Natural killer cell (primary cell): ENCODE measurements at regions of chr10 and their contacts with region 1.

Region 1: DNA sequence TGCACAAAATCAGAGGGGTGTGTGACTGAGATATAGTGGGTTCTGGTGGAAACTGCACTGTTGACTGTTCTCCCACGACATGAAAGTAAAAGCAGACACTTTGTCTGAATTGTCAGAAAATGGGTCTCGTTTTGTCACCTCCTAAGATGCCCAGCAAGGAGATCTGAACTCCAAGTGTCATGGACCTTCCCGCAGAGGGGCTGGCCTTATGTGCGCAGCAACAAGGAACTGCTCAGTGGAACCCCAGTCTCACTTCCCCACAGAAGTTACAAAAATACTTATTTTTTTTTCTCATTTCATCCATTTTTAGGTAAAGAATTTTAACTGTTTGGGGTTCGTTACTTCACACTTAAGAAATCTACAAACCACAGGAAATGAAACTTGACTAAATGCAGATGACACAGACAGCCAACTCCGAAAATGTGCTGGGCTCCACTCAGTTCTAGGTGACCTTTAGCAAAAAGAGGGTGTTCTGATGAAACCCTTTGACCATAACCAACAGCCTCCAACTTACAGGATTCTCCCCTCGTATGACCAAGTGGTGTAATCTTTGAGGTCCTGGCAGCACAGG is 115.0 kb downstream of the FAM107B start:
- DNase-seq: peak; percentile 52 to 68
- ATAC-seq: peak; percentile 78 to 88 (median 87)
- H3K4me3 ChIP-seq: no peak overlapping the region
- H3K4me3 Mint-ChIP-seq: peak overlapping the region; percentile 82
- H3K27ac ChIP-seq: peak overlapping the region; percentile 77
- H3K27ac Mint-ChIP-seq: peak overlapping the region; percentile 84 to 93
- H3K4me1 ChIP-seq: peaks cover 39% of the 10 kb centered on the region
- H3K4me1 Mint-ChIP-seq: peaks cover 74 to 85% of the 10 kb centered on the region in 2 donors
- H3K27me3 ChIP-seq: no peaks in the 10 kb centered on the region
- H3K27me3 Mint-ChIP-seq: no peaks in the 10 kb centered on the region
- CTCF ChIP-seq: no peak

Region 2: GRCh38 chr10:12783293-12783692 is 1876.4 kb before region 1 on chr10:
- intact Hi-C with region 1: no loop called
- DNase-seq: no peak
- ATAC-seq: no peak
- H3K4me3 ChIP-seq: no peak overlapping the region
- H3K4me3 Mint-ChIP-seq: no peak overlapping the region
- H3K27ac ChIP-seq: no peak overlapping the region
- H3K27ac Mint-ChIP-seq: no peak overlapping the region
- H3K4me1 ChIP-seq: no peaks in the 10 kb centered on the region
- H3K4me1 Mint-ChIP-seq: peaks cover 6 to 10% of the 10 kb centered on the region in 2 donors
- H3K27me3 ChIP-seq: no peaks in the 10 kb centered on the region
- H3K27me3 Mint-ChIP-seq: no peaks in the 10 kb centered on the region
- CTCF ChIP-seq: no peak

Region 3: GRCh38 chr10:14571866-14572507 is 87.7 kb before region 1 on chr10:
- intact Hi-C with region 1: loop called (anchors 5 kb)
- DNase-seq: peak; percentile 54 to 88
- ATAC-seq: peak; percentile 57 to 69 (median 63)
- H3K4me3 ChIP-seq: peak overlapping the region; percentile 24
- H3K4me3 Mint-ChIP-seq: peak overlapping the region; percentile 88
- H3K27ac ChIP-seq: peak overlapping the region; percentile 84
- H3K27ac Mint-ChIP-seq: peak overlapping the region; percentile 95 to 98
- H3K4me1 ChIP-seq: peaks cover 48% of the 10 kb centered on the region
- H3K4me1 Mint-ChIP-seq: peaks cover 61 to 63% of the 10 kb centered on the region in 2 donors
- H3K27me3 ChIP-seq: no peaks in the 10 kb centered on the region
- H3K27me3 Mint-ChIP-seq: no peaks in the 10 kb centered on the region
- CTCF ChIP-seq: no peak

Region 4: GRCh38 chr10:14648005-14648765 is 11.5 kb before region 1 on chr10:
- intact Hi-C with region 1: loop called (anchors 1 kb)
- DNase-seq: peak; percentile 57 to 90
- ATAC-seq: peak; percentile 85 to 90 (median 87)
- H3K4me3 ChIP-seq: peak overlapping the region; percentile 6
- H3K4me3 Mint-ChIP-seq: peak overlapping the region; percentile 76
- H3K27ac ChIP-seq: peak overlapping the region; percentile 96
- H3K27ac Mint-ChIP-seq: peak overlapping the region; percentile 94 to 96
- H3K4me1 ChIP-seq: peaks cover 29% of the 10 kb centered on the region
- H3K4me1 Mint-ChIP-seq: peaks cover 24 to 27% of the 10 kb centered on the region in 2 donors
- H3K27me3 ChIP-seq: no peaks in the 10 kb centered on the region
- H3K27me3 Mint-ChIP-seq: no peaks in the 10 kb centered on the region
- CTCF ChIP-seq: no peak

Region 5: GRCh38 chr10:14742815-14743214 is 83.1 kb after region 1 on chr10:
- intact Hi-C with region 1: no loop called
- DNase-seq: peak in 1 of 2 donors; percentile 22
- ATAC-seq: no peak
- H3K4me3 ChIP-seq: no peak overlapping the region
- H3K4me3 Mint-ChIP-seq: no peak overlapping the region
- H3K27ac ChIP-seq: peak overlapping the region; percentile 87
- H3K27ac Mint-ChIP-seq: peak overlapping the region in 1 of 2 donors; percentile 1
- H3K4me1 ChIP-seq: peaks cover 12% of the 10 kb centered on the region
- H3K4me1 Mint-ChIP-seq: peaks cover 0 to 6% of the 10 kb centered on the region in 2 donors
- H3K27me3 ChIP-seq: no peaks in the 10 kb centered on the region
- H3K27me3 Mint-ChIP-seq: peaks cover 0 to 3% of the 10 kb centered on the region in 2 donors
- CTCF ChIP-seq: no peak